GM10248 (cell line): ENCODE measurements at regions of chr15 and their contacts with region 1.

Region 1: GRCh38 chr15:94306700-94307650 is 75.6 kb downstream of the MCTP2 start:
- DNase-seq: peak; percentile 61
- CTCF ChIP-seq: no peak

Region 2: DNA sequence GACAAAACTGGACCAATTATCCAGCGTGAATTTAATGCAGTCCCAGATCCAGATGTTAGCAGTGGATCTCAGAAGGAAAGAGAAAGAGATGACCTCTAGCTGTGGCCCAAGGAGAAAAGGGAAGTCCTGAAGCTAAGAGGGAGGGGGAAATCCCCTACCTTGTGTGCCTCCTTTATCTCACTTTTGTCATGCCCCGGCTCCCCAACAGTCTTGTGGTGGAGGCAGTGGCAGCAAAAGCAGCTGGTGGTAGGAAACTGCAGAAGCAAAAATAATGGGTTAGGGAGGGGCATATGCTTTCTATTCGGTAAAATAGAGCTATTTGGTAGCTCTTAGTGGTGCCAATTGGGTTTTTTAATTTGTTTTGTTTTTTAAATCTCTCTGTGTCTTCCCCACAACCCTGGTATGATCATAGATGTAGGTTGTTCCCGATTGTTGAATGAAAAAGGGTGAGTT is 19.2 kb before region 1 on chr15:
- CTCF ChIA-PET with region 1: interaction called, 14 read pairs
- POLR2A ChIA-PET with region 1: no interaction called
- DNase-seq: peak; percentile 56
- CTCF ChIP-seq: no peak